Activated CD4-positive, alpha-beta memory T cell treated with anti-CD3 and anti-CD28 coated beads, Interleukin-2, amount 10 ng/mL, durations not matched to agents 7 days and 5 days (primary cell): ENCODE measurements at regions of chr3 and their contacts with region 1.

Region 1: DNA sequence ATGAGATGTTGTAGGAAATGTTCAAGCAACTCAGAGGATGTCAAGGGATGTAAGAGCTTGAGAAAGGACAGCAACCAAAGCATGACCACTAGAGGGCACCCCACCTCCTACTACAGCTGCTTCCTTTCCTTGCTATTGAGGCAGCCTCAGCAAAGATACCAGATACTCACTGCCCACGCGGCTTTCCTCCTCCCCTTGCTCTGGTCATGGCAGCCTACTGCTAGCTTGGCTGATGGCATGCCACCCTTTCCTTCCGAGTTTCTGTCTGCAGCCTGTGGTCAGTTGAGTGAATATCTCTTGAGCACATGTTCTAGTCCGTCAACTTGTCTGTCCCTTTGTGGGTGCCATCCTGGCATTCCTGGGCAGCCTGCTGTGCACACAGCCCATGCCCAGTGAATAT is 4.4 kb upstream of the CXCR6 start:
- DNase-seq: peak; percentile 89
- H3K4me3 Mint-ChIP-seq: no peak overlapping the region
- H3K27ac Mint-ChIP-seq: peak overlapping the region; percentile 2
- H3K4me1 Mint-ChIP-seq: peaks cover 52% of the 10 kb centered on the region
- H3K27me3 Mint-ChIP-seq: no peaks in the 10 kb centered on the region

Region 2: GRCh38 chr3:45760878-45761711 is 177.8 kb before region 1 on chr3:
- CTCF ChIA-PET with region 1: interaction called, 12 read pairs
- POLR2A ChIA-PET with region 1: no interaction called
- DNase-seq: peak; percentile 49
- H3K4me3 Mint-ChIP-seq: no peak overlapping the region
- H3K27ac Mint-ChIP-seq: no peak overlapping the region
- H3K4me1 Mint-ChIP-seq: no peaks in the 10 kb centered on the region
- H3K27me3 Mint-ChIP-seq: peaks cover 10% of the 10 kb centered on the region

Region 3: GRCh38 chr3:45964139-45964538 is 25.3 kb after region 1 on chr3:
- CTCF ChIA-PET with region 1: interaction called, 18 read pairs
- POLR2A ChIA-PET with region 1: interaction called, 15 read pairs
- DNase-seq: peak; percentile 62
- H3K4me3 Mint-ChIP-seq: no peak overlapping the region
- H3K27ac Mint-ChIP-seq: peak overlapping the region; percentile 83
- H3K4me1 Mint-ChIP-seq: peaks cover 80% of the 10 kb centered on the region
- H3K27me3 Mint-ChIP-seq: no peaks in the 10 kb centered on the region

Region 4: GRCh38 chr3:45978006-45978761 is 39.3 kb after region 1 on chr3:
- CTCF ChIA-PET with region 1: interaction called, 9 read pairs
- POLR2A ChIA-PET with region 1: interaction called, 45 read pairs
- DNase-seq: peak; percentile 83
- H3K4me3 Mint-ChIP-seq: peak overlapping the region; percentile 50
- H3K27ac Mint-ChIP-seq: peak overlapping the region; percentile 97
- H3K4me1 Mint-ChIP-seq: peaks cover 84% of the 10 kb centered on the region
- H3K27me3 Mint-ChIP-seq: no peaks in the 10 kb centered on the region

Region 5: GRCh38 chr3:46242120-46242519 is 303.3 kb after region 1 on chr3 and contains the start of gene CCR3:
- CTCF ChIA-PET with region 1: no interaction called
- POLR2A ChIA-PET with region 1: no interaction called
- DNase-seq: no peak
- H3K4me3 Mint-ChIP-seq: no peak within 1 kb of the TSS
- H3K27ac Mint-ChIP-seq: peak within 1 kb of the TSS; percentile 0
- H3K4me1 Mint-ChIP-seq: peaks cover 24% of the 10 kb centered on the region
- H3K27me3 Mint-ChIP-seq: peaks cover 35% of the 10 kb centered on the region
- total RNA-seq, gene CCR3: 1.2 to 1.9 TPM